Lower leg skin (tissue), 4 donors: ENCODE measurements at regions of chr6 and their contacts with region 1.

Region 1: GRCh38 chr6:56708810-56709597 is 66.3 kb upstream of the DST start:
- DNase-seq: no peak
- H3K4me3 ChIP-seq: no peak overlapping the region
- CTCF ChIP-seq: peak in 1 of 3 donors; percentile 9
- POLR2A ChIP-seq: no peak

Region 2: DNA sequence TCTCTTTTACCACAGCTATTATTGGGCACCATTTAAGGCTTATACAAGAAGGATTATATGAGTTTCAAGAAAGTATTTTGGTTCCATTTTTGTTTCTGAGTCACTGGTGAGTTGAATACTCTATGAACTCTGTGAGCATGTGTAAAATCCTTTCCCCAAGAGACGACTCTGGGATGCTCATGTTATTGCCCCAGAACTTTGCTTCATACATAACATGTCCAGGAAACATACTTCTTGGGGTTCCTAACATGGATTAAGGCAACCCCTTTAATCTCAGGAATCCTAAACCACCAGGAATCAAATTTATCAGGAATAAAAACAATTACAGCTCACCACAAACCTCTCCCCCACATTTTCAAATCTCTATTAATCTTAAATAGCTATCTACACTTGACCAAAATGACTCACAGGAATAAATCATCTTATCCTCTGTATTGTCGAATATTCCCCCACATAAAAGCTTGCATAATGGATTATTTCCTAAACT is 344.1 kb before region 1 on chr6:
- intact Hi-C with region 1: loop called (anchors 10 kb)
- DNase-seq: no peak
- H3K4me3 ChIP-seq: no peak overlapping the region
- CTCF ChIP-seq: no peak
- POLR2A ChIP-seq: no peak

Region 3: GRCh38 chr6:56724455-56724854 is 15.5 kb after region 1 on chr6:
- intact Hi-C with region 1: no loop called
- DNase-seq: no peak
- H3K4me3 ChIP-seq: no peak overlapping the region
- CTCF ChIP-seq: no peak
- POLR2A ChIP-seq: no peak